Heart left ventricle (tissue), 16 donors: ENCODE measurements at regions of chr20 and their contacts with region 1.

Region 1: DNA sequence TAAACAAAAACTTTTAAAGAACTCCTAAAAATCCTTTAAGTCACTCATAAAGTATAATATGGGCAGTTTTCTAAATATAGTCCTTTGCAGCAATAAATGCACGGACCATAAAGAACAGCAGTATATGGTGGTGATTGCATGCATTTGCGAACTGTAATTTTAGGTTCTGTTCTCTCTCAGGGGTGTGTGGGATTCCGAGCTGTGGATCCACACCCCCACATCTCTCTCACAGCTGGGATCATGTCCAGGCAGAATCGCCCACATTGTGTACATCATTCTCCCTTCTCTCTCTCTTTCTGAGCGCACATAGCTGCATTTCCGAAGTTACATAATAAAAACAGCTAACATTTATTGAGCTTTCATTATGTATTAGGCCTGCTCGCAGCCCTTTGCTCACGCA is 28.6 kb downstream of the SLC52A3 start:
- DNase-seq: no peak
- ATAC-seq: no peak
- H3K4me3 ChIP-seq: no peak overlapping the region
- H3K27ac ChIP-seq: no peak overlapping the region
- H3K4me1 ChIP-seq: peaks cover 0 to 3% (median 0%) of the 10 kb centered on the region in 12 donors
- H3K27me3 ChIP-seq: peaks cover 0 to 3% (median 0%) of the 10 kb centered on the region in 9 donors
- CTCF ChIP-seq: no peak
- POLR2A ChIP-seq: no peak

Region 2: DNA sequence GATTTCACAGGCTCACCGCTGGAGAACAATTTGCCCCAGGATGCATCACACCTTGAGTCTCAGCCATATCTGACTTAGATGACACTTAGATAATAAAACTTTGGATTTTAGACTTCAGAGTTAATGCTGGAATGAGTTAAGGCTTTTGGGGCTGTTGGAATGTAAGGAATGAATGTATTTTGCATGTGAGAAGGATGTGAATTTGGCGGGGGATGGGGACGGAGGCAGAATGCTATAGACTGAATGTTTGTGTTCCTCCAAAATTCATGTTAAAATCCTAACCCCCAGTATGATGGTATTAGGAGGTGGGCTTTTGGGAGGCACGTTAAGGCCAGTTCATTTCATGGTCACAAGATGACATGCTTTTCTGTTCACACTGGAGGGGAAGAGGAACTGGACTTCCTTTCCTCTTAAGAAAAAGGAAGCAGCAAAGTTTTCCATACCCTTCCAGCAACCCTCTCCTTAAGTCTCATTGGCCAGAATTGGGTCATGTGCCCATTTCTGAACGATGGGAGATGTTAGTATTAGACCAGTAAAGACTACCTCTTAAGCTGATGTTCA is 80.9 kb before region 1 on chr20:
- intact Hi-C with region 1: loop called in 2 of 10 experiments (anchors 5 kb)
- DNase-seq: no peak
- ATAC-seq: peak in 1 of 4 donors; percentile 18
- H3K4me3 ChIP-seq: no peak overlapping the region
- H3K27ac ChIP-seq: no peak overlapping the region
- H3K4me1 ChIP-seq: peaks cover 0 to 49% (median 6%) of the 10 kb centered on the region in 12 donors
- H3K27me3 ChIP-seq: peaks cover 11 to 32% (median 23%) of the 10 kb centered on the region in 9 donors
- CTCF ChIP-seq: no peak
- POLR2A ChIP-seq: no peak

Region 3: GRCh38 chr20:1281279-1282057 is 541.7 kb after region 1 on chr20:
- intact Hi-C with region 1: no loop called
- DNase-seq: no peak
- ATAC-seq: peak; percentile 45 to 82 (median 64)
- H3K4me3 ChIP-seq: no peak overlapping the region
- H3K27ac ChIP-seq: peak overlapping the region in 10 of 12 donors; percentile 2 to 52 (median 40)
- H3K4me1 ChIP-seq: peaks cover 0 to 16% (median 7%) of the 10 kb centered on the region in 12 donors
- H3K27me3 ChIP-seq: no peaks in the 10 kb centered on the region
- CTCF ChIP-seq: no peak
- POLR2A ChIP-seq: no peak